ENCODE measurements at regions of chr5 and their contacts with region 1.

Region 1: GRCh38 chr5:36507332-36507952 is 99.0 kb upstream of the SLC1A3 start:
- DNase-seq: peak; percentile 73
- H3K4me3 Mint-ChIP-seq: no peak overlapping the region
- H3K27ac Mint-ChIP-seq: no peak overlapping the region
- H3K4me1 Mint-ChIP-seq: no peaks in the 10 kb centered on the region
- H3K27me3 Mint-ChIP-seq: peaks cover 16% of the 10 kb centered on the region

Region 2: DNA sequence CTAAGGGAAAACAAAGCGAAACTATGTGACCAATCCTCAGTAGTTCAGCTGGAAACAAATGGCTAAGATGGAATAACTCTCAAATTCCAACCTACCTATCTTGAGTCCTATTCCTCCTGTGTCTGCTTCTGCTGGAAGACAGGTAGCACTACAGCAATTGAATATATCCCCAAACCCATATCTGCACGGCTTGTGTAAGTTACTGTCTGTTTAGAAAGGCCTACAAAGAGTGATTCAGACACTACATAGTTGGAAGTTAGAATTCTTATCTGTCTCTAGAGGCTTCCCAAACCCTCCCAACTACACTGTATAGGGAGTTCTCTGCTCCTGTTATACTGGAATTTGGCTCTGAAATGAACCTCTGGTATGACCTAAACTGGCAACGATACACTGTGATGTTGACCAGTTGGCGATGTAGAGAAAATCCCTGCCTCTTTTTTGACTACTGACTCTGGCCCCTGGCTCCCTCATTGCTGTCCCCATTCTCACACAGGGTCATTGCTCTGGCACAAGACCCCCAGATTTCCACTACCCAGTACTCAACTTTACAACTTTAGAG is 243.2 kb before region 1 on chr5:
- CTCF ChIA-PET with region 1: interaction called, 10 read pairs
- POLR2A ChIA-PET with region 1: no interaction called
- DNase-seq: no peak
- H3K4me3 Mint-ChIP-seq: no peak overlapping the region
- H3K27ac Mint-ChIP-seq: no peak overlapping the region
- H3K4me1 Mint-ChIP-seq: no peaks in the 10 kb centered on the region
- H3K27me3 Mint-ChIP-seq: peaks cover 18% of the 10 kb centered on the region

Region 3: DNA sequence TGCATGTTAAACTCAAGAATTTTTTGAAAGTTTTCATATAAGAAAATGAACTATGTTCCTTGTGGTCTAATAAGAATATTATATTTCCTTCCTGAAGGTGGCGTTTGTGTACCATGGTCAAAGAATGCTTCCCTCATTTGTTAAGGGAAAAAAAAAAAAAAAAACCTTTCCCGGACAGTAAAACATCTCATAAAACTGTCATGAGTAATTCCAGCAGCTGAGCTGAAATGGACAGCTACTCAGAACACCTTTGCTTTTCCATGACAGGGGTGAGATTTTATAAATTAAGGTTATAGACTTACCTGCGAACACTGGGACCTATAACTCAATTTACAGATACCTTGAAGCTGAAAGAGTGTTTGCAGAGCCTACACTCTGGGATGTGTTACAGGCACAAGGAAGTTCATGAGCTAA is 92.6 kb before region 1 on chr5:
- CTCF ChIA-PET with region 1: interaction called, 36 read pairs
- POLR2A ChIA-PET with region 1: no interaction called
- DNase-seq: no peak
- H3K4me3 Mint-ChIP-seq: no peak overlapping the region
- H3K27ac Mint-ChIP-seq: no peak overlapping the region
- H3K4me1 Mint-ChIP-seq: peaks cover 6% of the 10 kb centered on the region
- H3K27me3 Mint-ChIP-seq: peaks cover 6% of the 10 kb centered on the region

Measured in activated CD4-positive, alpha-beta memory T cell treated with anti-CD3 and anti-CD28 coated beads, Interleukin-2, amount 10 ng/mL, durations not matched to agents 7 days and 5 days (primary cell).